ENCODE measurements at regions of chr19 and their contacts with region 1.

Region 1: DNA sequence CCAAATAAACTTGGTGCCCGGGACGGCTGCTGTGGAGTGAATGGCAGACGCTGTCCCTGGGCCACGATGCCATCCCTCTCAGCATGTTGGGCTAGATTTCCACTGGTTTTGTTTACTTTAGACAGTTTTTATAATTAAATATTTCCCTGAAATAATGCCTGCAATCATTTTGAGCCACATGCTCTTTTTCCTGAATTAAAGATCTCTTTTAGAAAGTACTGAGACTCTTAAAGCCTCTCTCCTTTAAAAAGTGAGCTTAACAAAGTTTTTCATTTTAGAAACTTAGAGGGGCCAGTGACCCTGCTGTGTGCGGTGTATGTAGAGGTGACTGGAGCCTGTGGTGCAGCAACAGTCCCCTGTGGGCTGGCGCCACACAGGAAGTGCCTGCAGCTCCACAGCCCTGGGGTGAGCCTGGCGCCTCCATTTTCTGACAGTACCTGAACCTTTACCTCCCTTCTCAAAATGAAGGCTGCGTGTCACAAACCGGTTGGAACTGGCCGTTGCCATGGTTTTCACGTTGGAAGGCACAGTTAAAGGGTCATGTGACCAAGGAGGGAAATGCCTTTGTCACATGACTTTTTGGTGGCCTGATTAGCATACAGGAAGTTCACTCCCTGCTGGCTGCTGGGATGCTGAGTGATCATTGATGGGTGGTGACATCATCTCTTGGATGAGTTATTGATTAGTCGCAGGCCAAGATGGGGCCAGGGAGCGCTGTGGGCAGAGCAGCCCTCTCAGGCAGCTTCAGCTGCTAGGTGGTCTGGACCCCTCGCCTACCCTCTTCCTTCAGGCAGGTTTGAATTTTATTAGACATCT is 26.3 kb downstream of the TSSK6 start:
- DNase-seq: peak; percentile 75
- H3K4me3 ChIP-seq: no peak overlapping the region
- CTCF ChIP-seq: no peak

Region 2: GRCh38 chr19:19145684-19146608 is 343.1 kb before region 1 on chr19:
- CTCF ChIA-PET with region 1: interaction called, 11 read pairs
- POLR2A ChIA-PET with region 1: no interaction called
- DNase-seq: no peak
- H3K4me3 ChIP-seq: no peak overlapping the region
- CTCF ChIP-seq: peak; percentile 97

Region 3: DNA sequence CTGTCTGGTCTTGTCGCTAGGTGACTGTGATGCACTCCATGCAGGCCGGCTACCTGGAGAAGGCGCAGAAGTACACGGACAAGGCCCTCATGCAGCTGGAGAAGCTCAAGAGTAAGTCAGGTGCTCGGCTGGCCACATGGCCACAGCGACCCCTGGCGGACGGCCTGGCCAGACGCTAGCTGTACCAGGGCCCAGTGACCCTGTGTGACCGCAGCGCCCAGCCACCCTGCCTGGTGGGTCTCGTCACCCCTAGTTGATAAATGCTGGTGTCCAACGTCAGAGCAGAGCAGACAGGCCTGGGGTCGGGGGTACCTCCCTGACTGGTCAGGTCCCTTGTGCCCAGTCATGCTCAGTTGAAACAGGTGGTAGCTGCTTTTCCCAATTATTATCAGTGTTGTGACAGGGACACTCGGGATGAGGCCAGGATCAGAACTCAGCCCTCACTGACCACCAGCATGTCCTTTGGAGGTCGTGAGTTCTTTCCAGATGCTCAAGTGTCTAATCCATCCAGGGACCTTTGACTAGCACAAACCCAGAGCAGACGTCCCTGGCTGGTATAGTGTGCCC is 146.2 kb before region 1 on chr19:
- CTCF ChIA-PET with region 1: interaction called, 24 read pairs
- POLR2A ChIA-PET with region 1: no interaction called
- DNase-seq: no peak
- H3K4me3 ChIP-seq: no peak overlapping the region
- CTCF ChIP-seq: peak; percentile 91

Region 4: DNA sequence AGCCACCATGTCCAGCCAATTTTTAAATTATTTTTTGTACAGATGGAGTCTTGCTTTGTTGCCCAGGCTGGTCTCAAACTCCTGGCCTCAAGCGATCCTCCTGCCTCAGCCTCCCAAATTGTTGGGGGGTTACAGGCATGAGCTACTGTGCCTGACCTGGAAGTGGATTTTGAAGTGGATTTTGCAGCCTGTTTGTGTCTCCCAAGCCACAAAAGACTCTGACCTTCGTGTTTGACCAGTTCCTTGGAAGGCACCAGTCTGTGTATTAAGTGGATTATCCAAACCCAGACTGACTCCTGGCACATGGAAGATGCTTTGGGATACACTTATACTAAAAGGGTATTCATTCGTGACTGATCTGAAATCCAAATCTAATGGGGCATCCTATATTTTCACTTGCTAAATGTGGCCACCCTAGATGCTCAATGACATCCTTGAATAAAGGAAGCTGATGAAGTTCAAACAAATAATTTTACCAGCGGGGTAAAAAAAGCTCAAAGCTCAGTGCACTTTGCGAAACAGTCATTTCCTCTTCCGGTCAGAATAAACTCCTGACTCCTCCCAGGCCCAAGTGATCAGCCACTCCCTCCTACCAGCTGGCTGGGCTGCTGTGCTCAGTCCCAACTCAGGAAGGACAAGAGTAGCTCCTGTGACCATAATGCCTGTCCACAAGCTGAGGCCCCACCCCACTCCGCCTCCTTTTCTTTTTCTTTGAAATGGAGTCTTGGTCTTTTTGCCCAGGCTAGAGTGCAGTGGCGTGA is 116.2 kb before region 1 on chr19:
- CTCF ChIA-PET with region 1: interaction called, 392 read pairs
- POLR2A ChIA-PET with region 1: no interaction called
- DNase-seq: no peak
- H3K4me3 ChIP-seq: no peak overlapping the region
- CTCF ChIP-seq: no peak

Region 5: GRCh38 chr19:19404879-19405860 is 83.9 kb before region 1 on chr19 and contains the start of gene GATAD2A:
- CTCF ChIA-PET with region 1: interaction called, 41 read pairs
- POLR2A ChIA-PET with region 1: interaction called, 5 read pairs
- DNase-seq: no peak
- H3K4me3 ChIP-seq: peak within 1 kb of the TSS; percentile 75
- CTCF ChIP-seq: peak; percentile 48

Region 6: DNA sequence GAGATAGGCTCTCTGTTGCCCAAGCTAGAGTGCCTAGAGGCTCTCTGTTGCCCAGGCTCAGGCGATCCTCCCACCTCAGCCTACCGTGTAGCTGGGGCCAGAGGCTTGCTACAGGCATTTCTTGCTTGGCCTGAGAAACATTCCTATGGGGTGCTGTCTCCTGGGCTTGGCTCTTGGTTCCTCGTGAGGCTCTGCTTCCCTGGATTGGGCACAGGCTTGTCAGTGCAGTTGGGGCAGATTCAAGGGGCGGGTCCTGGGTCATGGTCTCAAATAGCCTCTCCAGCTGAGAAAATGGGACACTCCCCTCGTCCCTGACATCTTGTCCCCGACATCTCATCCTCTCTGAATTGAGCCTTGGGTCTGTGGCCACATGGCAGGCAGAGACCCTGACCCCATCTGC is 21.3 kb after region 1 on chr19:
- CTCF ChIA-PET with region 1: interaction called, 22 read pairs
- POLR2A ChIA-PET with region 1: no interaction called
- DNase-seq: no peak
- H3K4me3 ChIP-seq: no peak overlapping the region
- CTCF ChIP-seq: no peak

Measured in AG04449 (cell line).